IMR-90 (cell line): ENCODE measurements at regions of chr1 and their contacts with region 1.

Region 1: DNA sequence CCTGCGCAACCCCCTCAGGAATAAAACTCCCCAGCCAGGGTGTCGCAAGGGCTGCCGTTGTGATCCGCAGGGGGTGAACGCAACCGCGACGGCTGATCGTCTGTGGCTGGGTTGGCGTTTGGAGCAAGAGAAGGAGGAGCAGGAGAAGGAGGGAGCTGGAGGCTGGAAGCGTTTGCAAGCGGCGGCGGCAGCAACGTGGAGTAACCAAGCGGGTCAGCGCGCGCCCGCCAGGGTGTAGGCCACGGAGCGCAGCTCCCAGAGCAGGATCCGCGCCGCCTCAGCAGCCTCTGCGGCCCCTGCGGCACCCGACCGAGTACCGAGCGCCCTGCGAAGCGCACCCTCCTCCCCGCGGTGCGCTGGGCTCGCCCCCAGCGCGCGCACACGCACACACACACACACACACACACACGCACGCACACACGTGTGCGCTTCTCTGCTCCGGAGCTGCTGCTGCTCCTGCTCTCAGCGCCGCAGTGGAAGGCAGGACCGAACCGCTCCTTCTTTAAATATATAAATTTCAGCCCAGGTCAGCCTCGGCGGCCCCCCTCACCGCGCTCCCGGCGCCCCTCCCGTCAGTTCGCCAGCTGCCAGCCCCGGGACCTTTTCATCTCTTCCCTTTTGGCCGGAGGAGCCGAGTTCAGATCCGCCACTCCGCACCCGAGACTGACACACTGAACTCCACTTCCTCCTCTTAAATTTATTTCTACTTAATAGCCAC is 696 bp downstream of the TGFB2 start:
- DNase-seq: peak; percentile 70
- ATAC-seq: peak; percentile 56
- H3K4me3 ChIP-seq: peak overlapping the region; percentile 81
- H3K27ac ChIP-seq: peak overlapping the region; percentile 76
- H3K4me1 ChIP-seq: peaks cover 4% of the 10 kb centered on the region
- H3K27me3 ChIP-seq: no peaks in the 10 kb centered on the region
- CTCF ChIP-seq: no peak
- POLR2A ChIP-seq: no peak
- RAD21 ChIP-seq: no peak

Region 2: DNA sequence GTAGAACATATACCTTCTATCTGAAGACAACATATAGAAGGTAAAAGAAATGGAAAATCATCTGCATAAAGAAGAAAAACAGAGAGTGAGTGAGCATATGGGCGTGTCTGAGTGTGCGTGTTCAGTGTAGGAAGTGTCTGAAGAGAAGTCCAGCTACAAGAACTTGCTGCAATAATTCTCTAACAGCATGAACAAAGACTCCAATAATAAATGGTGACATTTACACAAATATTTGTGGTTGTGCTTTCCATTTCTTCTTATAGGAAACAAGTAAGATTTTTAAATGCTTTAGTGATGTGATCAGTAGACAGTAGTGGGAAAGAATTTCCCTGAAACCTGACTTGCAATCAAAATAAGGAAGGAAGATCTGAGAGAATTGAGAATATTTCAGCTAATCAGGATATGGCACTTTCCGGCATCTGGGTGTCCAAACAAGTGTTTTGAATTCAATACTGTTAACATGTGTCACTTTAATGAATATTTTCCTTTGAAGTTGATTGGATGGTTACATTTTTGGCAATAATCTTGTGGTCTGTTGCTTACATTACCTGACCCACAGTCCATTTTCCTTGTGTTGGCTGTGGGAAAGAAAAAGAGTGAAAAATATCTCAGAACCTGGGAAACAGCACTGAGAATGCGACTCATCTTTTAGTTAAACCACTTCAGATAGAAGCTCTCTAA is 153.3 kb after region 1 on chr1:
- CTCF ChIA-PET with region 1: no interaction called
- POLR2A ChIA-PET with region 1: interaction called, 5 read pairs
- dilution Hi-C with region 1: no loop called
- in situ Hi-C with region 1: no loop called
- intact Hi-C with region 1: loop called (anchors 1 kb)
- DNase-seq: peak; percentile 79
- ATAC-seq: peak; percentile 31
- H3K4me3 ChIP-seq: peak overlapping the region; percentile 52; the same call in 1 of the 2 replicates
- H3K27ac ChIP-seq: peak overlapping the region; percentile 77
- H3K4me1 ChIP-seq: peaks cover 6% of the 10 kb centered on the region
- H3K27me3 ChIP-seq: no peaks in the 10 kb centered on the region
- CTCF ChIP-seq: no peak
- POLR2A ChIP-seq: no peak; the same call in none of the 2 replicates
- RAD21 ChIP-seq: no peak; the same call in 1 of the 2 replicates

Region 3: GRCh38 chr1:218823291-218823900 is 477.6 kb after region 1 on chr1:
- CTCF ChIA-PET with region 1: no interaction called
- POLR2A ChIA-PET with region 1: no interaction called
- dilution Hi-C with region 1: no loop called
- in situ Hi-C with region 1: no loop called
- intact Hi-C with region 1: loop called (anchors 5 kb)
- DNase-seq: peak; percentile 94
- ATAC-seq: peak; percentile 94
- H3K4me3 ChIP-seq: no peak overlapping the region
- H3K27ac ChIP-seq: peak overlapping the region; percentile 94
- H3K4me1 ChIP-seq: peaks cover 5% of the 10 kb centered on the region
- H3K27me3 ChIP-seq: no peaks in the 10 kb centered on the region
- CTCF ChIP-seq: no peak
- POLR2A ChIP-seq: no peak
- RAD21 ChIP-seq: no peak

Region 4: GRCh38 chr1:219173758-219174588 is 828.1 kb after region 1 on chr1 and contains the start of gene LYPLAL1:
- CTCF ChIA-PET with region 1: no interaction called
- POLR2A ChIA-PET with region 1: interaction called, 4 read pairs
- dilution Hi-C with region 1: no loop called
- in situ Hi-C with region 1: loop called (anchors 10 kb)
- intact Hi-C with region 1: loop called (anchors 5 kb)
- DNase-seq: peak; percentile 89
- ATAC-seq: peak; percentile 93
- H3K4me3 ChIP-seq: peak within 1 kb of the TSS; percentile 59
- H3K27ac ChIP-seq: peak within 1 kb of the TSS; percentile 93
- H3K4me1 ChIP-seq: peaks cover 6% of the 10 kb centered on the region
- H3K27me3 ChIP-seq: no peaks in the 10 kb centered on the region
- CTCF ChIP-seq: no peak
- POLR2A ChIP-seq: peak; percentile 75
- RAD21 ChIP-seq: no peak
- total RNA-seq, gene LYPLAL1: 4.8 and 11.4 TPM in 2 replicates

Region 5: GRCh38 chr1:219385786-219386427 is 1040.1 kb after region 1 on chr1:
- CTCF ChIA-PET with region 1: interaction called, 3 read pairs
- POLR2A ChIA-PET with region 1: no interaction called
- dilution Hi-C with region 1: no loop called
- in situ Hi-C with region 1: loop called (anchors 10 kb)
- intact Hi-C with region 1: no loop called
- DNase-seq: peak; percentile 71
- ATAC-seq: peak; percentile 87
- H3K4me3 ChIP-seq: no peak overlapping the region
- H3K27ac ChIP-seq: no peak overlapping the region
- H3K4me1 ChIP-seq: peaks cover 2% of the 10 kb centered on the region; the same call in 1 of the 2 replicates
- H3K27me3 ChIP-seq: no peaks in the 10 kb centered on the region
- CTCF ChIP-seq: peak; percentile 83
- POLR2A ChIP-seq: no peak
- RAD21 ChIP-seq: peak; percentile 92